Mammary epithelial cell (primary cell): ENCODE measurements at regions of chr9 and their contacts with region 1.

Region 1: GRCh38 chr9:15735083-15735974 is 182.5 kb downstream of the CCDC171 start:
- DNase-seq: peak; percentile 81
- H3K4me3 ChIP-seq: peak overlapping the region in 1 of 3 experiments; percentile 21
- H3K27ac ChIP-seq: peak overlapping the region; percentile 52
- H3K4me1 ChIP-seq: peaks cover 12% of the 10 kb centered on the region
- H3K27me3 ChIP-seq: no peaks in the 10 kb centered on the region
- CTCF ChIP-seq: no peak

Region 2: GRCh38 chr9:15697446-15697851 is 37.9 kb before region 1 on chr9:
- CTCF ChIA-PET with region 1: no interaction called
- dilution Hi-C with region 1: no loop called
- in situ Hi-C with region 1: no loop called
- intact Hi-C with region 1: loop called (anchors 1 kb)
- DNase-seq: peak; percentile 79
- H3K4me3 ChIP-seq: no peak overlapping the region
- H3K27ac ChIP-seq: no peak overlapping the region
- H3K4me1 ChIP-seq: peaks cover 9% of the 10 kb centered on the region
- H3K27me3 ChIP-seq: no peaks in the 10 kb centered on the region
- CTCF ChIP-seq: no peak